ENCODE measurements at regions of chr12 and their contacts with region 1.

Region 1: DNA sequence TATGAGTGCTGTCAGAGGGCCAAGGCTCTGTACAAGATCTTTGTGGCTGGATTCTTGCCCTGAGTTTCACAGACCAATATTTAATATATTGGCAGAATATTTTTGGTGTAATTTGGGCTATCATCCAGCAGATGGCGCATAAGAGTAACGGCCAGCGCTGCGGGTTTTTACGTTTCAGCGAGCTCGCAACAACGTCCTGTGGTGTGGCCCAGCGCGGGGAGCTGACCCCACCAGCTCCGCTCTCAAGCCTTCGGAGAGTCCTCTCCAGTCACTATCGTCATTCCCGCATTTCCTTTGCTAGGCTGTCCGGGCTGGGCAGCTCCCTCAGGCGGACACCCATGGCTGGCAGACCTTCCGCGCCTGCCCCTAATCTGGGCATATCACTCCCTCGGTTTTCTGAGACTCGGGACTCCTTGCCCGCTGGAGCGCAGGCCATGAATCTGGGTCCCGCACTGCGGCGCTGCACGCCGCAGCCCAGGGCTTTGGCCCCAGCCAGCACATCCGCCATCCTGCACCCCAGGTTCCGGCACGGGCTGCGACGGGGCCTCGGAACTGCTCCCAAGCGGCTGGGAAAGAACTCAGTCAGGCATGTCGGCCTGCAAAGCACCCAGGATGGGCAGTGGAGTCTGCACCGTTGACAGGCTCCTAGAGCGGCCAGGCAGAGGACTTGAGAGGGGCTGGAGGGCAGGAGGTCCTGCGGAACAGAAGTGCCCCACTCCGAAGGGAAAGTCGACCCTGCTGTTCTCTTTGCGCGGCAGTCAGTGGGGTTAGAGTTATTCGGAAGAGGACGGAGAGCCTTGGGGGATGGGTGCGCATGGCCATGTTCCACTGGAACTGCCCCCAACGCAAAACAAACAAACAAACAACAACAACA is 18.4 kb downstream of the OLR1 start:
- DNase-seq: no peak
- H3K4me3 ChIP-seq: peak overlapping the region; percentile 58
- CTCF ChIP-seq: peak; percentile 60

Region 2: DNA sequence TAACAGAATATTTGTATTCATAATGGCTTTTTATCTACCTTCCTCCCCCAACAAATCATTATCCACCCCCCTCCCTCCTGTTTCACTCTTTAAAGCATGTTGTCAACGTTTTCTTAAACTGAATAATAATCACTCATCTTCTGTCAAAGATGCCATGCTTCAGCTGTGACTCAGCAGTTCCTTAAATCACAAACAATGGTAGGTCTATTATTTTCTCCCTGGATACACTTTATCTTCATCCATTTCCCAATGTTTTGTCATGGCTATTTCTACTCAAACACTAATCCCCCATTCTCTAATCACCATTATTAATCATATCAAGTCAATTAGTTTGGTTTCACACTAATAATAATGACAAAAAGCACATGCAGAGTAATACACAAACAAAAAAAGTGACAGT is 136.6 kb before region 1 on chr12:
- CTCF ChIA-PET with region 1: interaction called, 14 read pairs
- POLR2A ChIA-PET with region 1: no interaction called
- DNase-seq: no peak
- H3K4me3 ChIP-seq: no peak overlapping the region
- CTCF ChIP-seq: no peak

Region 3: DNA sequence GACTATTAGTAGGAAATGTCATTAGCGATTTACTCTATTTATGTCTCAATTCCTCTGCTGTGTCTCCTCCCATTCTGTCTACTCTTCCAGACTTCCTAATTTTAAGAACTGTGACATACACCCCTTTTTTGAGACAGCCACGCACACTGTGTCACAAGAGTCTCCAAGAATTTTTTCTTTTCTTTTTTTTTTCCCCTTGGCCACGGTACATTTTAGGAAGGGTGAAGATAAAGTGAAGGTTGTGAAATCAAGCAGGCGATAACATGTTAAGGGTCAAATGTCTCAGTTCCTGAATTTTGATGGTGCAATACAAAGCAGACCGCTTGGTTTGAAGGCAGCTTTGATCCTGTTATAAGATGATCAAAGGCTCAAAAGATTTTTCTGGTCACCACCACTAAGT is 14.1 kb after region 1 on chr12:
- CTCF ChIA-PET with region 1: interaction called, 16 read pairs
- POLR2A ChIA-PET with region 1: no interaction called
- DNase-seq: no peak
- H3K4me3 ChIP-seq: no peak overlapping the region
- CTCF ChIP-seq: no peak

Region 4: GRCh38 chr12:10190558-10191388 is 37.3 kb after region 1 on chr12:
- CTCF ChIA-PET with region 1: interaction called, 59 read pairs
- POLR2A ChIA-PET with region 1: no interaction called
- DNase-seq: no peak
- H3K4me3 ChIP-seq: no peak overlapping the region
- CTCF ChIP-seq: peak; percentile 86

Region 5: GRCh38 chr12:10205251-10205807 is 51.8 kb after region 1 on chr12:
- CTCF ChIA-PET with region 1: interaction called, 11 read pairs
- POLR2A ChIA-PET with region 1: no interaction called
- DNase-seq: no peak
- H3K4me3 ChIP-seq: no peak overlapping the region
- CTCF ChIP-seq: no peak

Region 6: GRCh38 chr12:10235761-10236631 is 82.5 kb after region 1 on chr12:
- CTCF ChIA-PET with region 1: interaction called, 17 read pairs
- POLR2A ChIA-PET with region 1: no interaction called
- DNase-seq: no peak
- H3K4me3 ChIP-seq: no peak overlapping the region
- CTCF ChIP-seq: peak; percentile 77

Measured in AG04449 (cell line).